MCF 10A (cell line): ENCODE measurements at regions of chr11 and their contacts with region 1.

Region 1: GRCh38 chr11:13289081-13289480 is 11.5 kb downstream of the BMAL1 start:
- DNase-seq: peak; percentile 51
- H3K4me3 Mint-ChIP-seq: no peak overlapping the region
- H3K27ac Mint-ChIP-seq: no peak overlapping the region
- H3K4me1 Mint-ChIP-seq: peaks cover 44% of the 10 kb centered on the region
- H3K27me3 Mint-ChIP-seq: no peaks in the 10 kb centered on the region
- CTCF ChIP-seq: no peak

Region 2: GRCh38 chr11:13073119-13073981 is 215.7 kb before region 1 on chr11:
- CTCF ChIA-PET with region 1: no interaction called
- POLR2A ChIA-PET with region 1: no interaction called
- intact Hi-C with region 1: no loop called
- DNase-seq: peak; percentile 93
- H3K4me3 Mint-ChIP-seq: no peak overlapping the region
- H3K27ac Mint-ChIP-seq: peak overlapping the region; percentile 73
- H3K4me1 Mint-ChIP-seq: peaks cover 24% of the 10 kb centered on the region
- H3K27me3 Mint-ChIP-seq: no peaks in the 10 kb centered on the region
- CTCF ChIP-seq: no peak

Region 3: GRCh38 chr11:13249996-13250395 is 39.1 kb before region 1 on chr11:
- CTCF ChIA-PET with region 1: no interaction called
- POLR2A ChIA-PET with region 1: interaction called, 3 read pairs
- intact Hi-C with region 1: loop called (anchors 5 kb)
- DNase-seq: peak; percentile 36
- H3K4me3 Mint-ChIP-seq: no peak overlapping the region
- H3K27ac Mint-ChIP-seq: no peak overlapping the region
- H3K4me1 Mint-ChIP-seq: no peaks in the 10 kb centered on the region
- H3K27me3 Mint-ChIP-seq: no peaks in the 10 kb centered on the region
- CTCF ChIP-seq: peak; percentile 52

Region 4: DNA sequence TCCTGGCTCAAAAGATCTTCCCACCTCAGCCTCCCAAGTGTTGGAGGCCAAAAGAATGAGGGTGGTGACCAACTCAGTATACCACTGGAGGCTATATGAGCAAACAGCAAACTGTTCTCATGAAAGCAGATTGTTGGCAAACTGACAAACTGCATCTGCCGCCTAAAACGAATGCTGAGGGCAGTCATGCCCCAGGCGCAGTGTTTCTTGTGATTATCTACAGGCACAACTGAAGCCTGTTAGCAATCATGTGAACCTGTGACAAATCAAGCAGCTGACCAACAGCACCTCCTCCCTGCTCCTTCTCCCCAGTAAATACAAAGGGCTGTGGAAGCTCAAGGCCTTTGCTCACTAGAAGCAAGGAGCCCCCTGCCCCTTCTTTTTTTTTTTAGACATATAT is 126.1 kb after region 1 on chr11:
- CTCF ChIA-PET with region 1: no interaction called
- POLR2A ChIA-PET with region 1: no interaction called
- intact Hi-C with region 1: no loop called
- DNase-seq: peak; percentile 14
- H3K4me3 Mint-ChIP-seq: no peak overlapping the region
- H3K27ac Mint-ChIP-seq: no peak overlapping the region
- H3K4me1 Mint-ChIP-seq: no peaks in the 10 kb centered on the region
- H3K27me3 Mint-ChIP-seq: no peaks in the 10 kb centered on the region
- CTCF ChIP-seq: no peak